ENCODE measurements at regions of chr17 and their contacts with region 1.

Region 1: DNA sequence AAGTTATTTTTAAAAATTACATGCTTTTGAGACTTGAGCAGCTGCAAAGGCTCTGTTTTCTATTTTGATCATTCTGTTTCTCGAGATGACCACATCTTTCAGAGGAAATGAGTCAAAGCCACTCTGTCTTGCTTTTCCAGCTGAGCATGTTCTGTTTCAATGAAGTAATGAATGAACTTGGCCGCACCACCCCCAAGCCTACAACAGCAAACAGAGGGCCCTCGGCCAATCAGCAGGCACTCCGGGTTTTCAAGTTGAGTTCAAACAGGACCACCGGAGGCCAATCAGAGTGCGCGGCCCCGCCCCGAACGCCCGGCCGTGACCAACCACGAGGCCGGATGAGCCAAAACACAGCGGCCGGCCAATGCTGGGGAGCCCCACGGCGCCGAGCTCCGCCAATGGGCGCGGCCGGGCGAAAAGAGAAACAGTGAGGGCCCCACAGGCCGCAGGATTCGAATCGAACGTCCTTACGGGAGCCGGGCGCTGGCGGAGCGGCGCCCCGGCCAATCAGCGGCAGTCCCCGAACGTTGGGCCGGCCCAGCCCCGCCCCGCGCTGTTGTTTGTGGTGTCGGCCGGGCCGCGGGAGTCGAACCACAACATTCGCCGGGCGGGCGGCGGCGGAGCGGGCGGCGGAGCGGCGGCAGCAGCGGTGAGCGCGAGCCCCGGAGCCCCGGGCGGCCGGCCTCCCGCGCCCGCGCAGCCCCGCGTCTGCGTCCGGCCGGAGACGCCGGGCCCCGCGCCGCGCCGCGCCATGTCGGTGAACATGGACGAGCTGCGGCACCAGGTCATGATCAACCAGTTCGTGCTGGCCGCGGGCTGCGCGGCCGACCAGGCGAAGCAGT is at the start of gene UBALD2:
- DNase-seq: peak; percentile 98 to 100 (median 99)
- H3K4me3 ChIP-seq: peak within 1 kb of the TSS; percentile 71 to 97 (median 87)
- H3K27ac ChIP-seq: peak within 1 kb of the TSS; percentile 89 to 94
- H3K4me1 ChIP-seq: peaks cover 26 to 85% (median 68%) of the 10 kb centered on the region in 4 experiments
- H3K27me3 ChIP-seq: no peaks in the 10 kb centered on the region

Region 2: DNA sequence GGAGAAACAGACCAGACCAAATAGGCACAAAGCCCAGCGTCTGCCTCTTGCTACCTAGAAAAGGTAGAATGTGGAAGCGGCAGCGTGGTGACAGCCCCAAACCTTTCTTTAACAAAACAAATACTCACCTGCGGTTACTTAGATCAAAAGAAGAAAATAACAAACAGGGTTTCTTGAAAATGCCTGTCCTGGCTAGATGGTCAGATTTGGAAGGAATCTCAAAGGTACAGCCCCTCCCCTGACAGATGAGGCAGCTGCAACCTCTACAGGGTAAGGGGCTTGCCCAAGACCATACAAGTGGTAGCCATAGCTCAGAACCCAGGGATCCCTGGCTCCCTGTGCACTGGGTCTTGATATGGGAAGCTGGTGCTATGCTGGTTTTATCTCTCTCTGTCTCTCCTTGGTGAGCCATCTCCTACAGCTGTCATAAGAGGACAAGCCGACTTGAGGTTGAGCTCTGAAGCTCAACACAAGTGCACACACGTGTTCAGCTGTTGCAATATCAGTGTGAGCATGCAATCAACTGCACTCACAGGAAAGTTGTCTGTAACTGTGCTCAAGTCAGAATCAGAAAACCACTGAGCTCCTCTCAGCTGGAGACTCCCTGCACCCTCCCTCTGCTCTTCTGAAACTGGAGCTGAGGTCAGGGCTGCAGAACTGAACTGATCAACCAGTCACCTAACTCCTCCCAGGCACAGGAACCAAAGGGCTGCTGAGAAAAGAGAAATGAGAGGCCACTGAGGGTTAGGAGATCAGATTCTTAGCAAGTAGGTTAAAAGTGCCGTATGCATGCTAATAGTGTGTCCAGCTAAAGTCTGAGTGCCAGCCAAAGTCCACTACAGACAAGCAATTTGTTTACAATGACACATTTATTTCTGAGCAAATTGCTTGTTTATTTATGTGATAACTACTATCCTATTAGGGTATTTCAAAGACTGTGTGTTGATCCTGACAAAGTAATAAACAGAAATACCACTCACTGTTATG is 18.6 kb before region 1 on chr17:
- CTCF ChIA-PET with region 1: interaction called, 35 read pairs
- POLR2A ChIA-PET with region 1: interaction called, 4 read pairs
- DNase-seq: peak in 2 of 3 donors; percentile 47 to 55
- H3K4me3 ChIP-seq: no peak overlapping the region
- H3K27ac ChIP-seq: no peak overlapping the region
- H3K4me1 ChIP-seq: peaks cover 8 to 50% (median 24%) of the 10 kb centered on the region in 4 experiments
- H3K27me3 ChIP-seq: peaks cover 0 to 25% (median 15%) of the 10 kb centered on the region in 5 experiments

Region 3: DNA sequence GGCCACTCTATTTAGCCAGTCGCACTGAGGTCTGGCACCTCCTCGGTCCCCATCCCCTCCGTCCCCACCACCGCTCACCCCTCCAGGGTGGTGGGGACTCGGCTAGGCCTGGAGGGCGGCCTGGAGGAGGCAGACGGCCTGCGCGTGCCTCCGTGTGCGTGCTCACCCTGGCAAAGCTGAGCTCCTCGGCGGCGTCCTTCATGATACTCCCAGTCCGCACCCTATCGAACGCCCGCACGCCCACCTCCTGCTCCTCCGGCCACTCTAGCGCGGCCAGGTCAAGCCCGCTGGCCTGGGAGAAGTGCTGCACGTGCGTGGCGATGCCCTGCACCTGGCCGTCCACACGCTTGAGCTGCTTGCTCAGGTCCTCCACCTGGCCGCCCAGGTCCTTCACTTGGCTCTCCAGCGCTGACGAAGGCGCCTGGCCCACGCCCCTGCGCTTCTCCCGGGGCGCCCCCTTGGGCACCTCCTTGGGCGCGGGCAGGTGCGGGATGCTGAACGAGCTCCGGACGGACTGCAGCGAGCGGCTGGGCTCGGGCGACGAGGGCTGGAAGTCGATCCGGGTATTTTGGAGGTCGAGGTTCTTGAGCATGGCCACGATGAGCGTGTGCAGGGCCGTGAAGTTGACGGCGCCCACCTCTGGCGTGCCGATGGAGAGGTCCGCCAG is 42.5 kb after region 1 on chr17:
- CTCF ChIA-PET with region 1: no interaction called
- POLR2A ChIA-PET with region 1: no interaction called
- DNase-seq: no peak
- H3K4me3 ChIP-seq: no peak overlapping the region
- H3K27ac ChIP-seq: no peak overlapping the region
- H3K4me1 ChIP-seq: no peaks in the 10 kb centered on the region
- H3K27me3 ChIP-seq: no peaks in the 10 kb centered on the region

Region 4: GRCh38 chr17:76365256-76365903 is 100.4 kb after region 1 on chr17:
- CTCF ChIA-PET with region 1: no interaction called
- POLR2A ChIA-PET with region 1: no interaction called
- DNase-seq: peak in 1 of 3 donors; percentile 24
- H3K4me3 ChIP-seq: no peak overlapping the region
- H3K27ac ChIP-seq: no peak overlapping the region
- H3K4me1 ChIP-seq: no peaks in the 10 kb centered on the region
- H3K27me3 ChIP-seq: no peaks in the 10 kb centered on the region

Measured in common myeloid progenitor, CD34-positive (primary cell).